Right ventricle myocardium inferior (tissue), 1 donor: ENCODE measurements at regions of chr14 and their contacts with region 1.

Region 1: GRCh38 chr14:33950320-33951182 is at the start of gene EGLN3:
- DNase-seq: peak; percentile 93
- ATAC-seq: peak; percentile 99
- total RNA-seq, gene EGLN3: 136 TPM

Region 2: DNA sequence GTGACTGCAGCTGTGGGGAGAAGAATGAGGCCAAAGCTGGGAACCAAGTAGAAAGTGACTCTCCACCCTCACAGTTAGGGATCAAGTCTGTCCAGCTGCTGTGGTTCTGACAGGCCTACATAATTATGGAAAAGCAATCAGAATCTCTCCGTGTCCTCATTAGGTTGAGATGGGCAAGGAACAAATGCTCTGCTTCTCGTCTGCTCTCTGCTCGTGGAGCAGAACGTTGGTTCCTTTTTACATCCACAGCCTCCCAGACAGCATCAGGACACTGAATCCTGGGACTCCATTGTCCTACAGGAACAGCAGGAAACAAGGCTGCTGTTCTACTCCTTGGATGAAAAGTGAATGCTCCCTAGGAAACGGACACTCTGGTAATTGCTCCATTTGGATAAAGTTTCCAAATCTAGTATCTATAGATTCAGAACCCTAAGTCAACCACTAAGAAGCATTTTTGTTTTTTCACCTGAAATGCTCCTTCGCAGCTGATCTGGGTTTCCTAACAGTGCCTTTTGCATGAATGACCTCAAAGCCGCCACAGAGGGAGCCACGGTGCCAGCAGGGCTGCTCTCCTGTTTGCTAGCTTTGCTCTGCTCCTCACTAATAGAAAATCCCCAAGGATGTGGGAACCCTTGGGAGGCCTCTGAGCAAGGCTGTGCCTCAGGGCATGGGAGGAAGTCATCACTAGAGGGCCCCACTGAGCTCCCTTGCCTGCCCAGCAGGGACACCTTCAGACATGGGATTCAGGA is 101.7 kb before region 1 on chr14:
- intact Hi-C with region 1: loop called (anchors 1 kb)
- DNase-seq: no peak
- ATAC-seq: peak; percentile 91

Region 3: GRCh38 chr14:33871394-33871793 is 79.2 kb before region 1 on chr14:
- intact Hi-C with region 1: no loop called
- DNase-seq: no peak
- ATAC-seq: no peak

Region 4: DNA sequence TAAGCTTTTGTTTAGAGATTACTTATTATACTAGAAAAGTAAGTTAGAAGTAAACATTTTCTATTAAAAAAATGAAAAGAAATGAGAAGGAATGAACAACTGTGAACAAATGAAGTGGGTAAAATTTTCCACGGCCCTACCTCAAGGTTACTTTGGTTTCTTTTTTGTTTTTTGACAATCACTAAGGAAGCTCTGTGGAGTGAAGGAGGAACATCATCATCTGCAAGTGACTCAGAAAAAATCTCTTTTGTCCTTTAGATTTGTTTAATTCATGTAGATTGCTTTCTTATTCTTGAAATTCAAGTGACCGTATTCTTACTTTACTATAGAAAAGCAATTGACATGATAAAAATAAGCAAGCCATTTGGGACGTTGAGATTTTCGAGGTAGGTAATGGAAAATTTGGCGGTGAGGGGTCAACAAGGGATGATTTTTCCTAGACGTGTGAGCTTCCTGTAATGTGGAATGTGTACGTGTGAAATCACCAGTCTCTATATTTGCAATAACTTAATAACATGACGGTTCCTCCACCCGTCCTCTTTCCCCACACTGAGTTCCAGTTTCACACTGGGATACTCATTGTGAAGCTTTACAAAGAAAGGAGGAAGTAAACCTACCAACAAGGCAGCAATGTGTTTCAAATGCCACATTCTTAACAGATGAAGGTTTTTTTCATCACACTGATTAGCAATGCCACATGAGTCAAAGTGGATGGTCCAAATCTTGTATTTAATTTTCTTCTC is 62.6 kb after region 1 on chr14:
- intact Hi-C with region 1: no loop called
- DNase-seq: no peak
- ATAC-seq: no peak

Region 5: DNA sequence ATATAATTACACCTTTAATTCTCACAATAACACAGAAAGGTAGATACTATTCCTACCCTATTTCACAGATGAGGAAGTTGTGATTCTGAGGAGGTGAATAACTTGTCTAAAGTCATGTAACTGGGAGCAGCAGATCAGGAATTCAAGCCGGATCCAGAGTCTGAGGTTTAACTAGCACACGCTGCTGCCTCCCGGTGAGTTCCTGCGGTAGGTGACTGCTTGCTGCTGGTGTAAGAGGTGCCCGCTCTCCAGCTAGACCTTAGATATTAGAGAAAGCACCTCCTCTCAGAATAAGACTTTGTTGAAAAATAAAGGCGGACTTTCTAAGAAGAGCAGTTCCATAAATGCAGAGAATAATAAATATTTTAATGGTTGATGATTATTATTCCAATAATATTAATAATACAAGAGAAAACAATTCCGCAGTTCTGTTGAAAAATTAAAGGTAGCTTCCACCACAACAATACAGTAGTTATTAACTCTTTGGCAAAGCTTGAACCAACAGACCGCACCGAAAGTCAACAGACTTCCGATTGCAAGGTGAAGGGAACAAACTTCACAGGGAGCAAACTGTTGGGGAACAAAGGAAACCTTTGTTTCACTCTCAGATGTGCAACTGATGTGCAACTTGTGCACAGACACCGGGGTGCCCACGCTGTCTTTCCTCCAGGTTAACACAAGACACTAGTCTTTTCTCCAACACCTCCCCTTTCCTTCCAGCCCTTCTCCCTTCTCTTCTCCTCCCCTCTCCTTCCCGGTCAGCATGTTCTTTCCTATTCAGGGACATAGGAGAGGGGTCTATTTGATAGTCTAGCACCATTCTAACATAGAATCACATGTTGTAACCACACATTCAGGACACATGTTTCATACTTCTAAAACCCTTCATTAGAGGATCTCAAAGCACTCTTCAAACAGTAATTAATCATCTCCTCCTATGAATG is 73.5 kb after region 1 on chr14:
- intact Hi-C with region 1: no loop called
- DNase-seq: no peak
- ATAC-seq: no peak

Region 6: GRCh38 chr14:34059855-34060638 is 109.5 kb after region 1 on chr14:
- intact Hi-C with region 1: loop called (anchors 2 kb)
- DNase-seq: peak; percentile 89
- ATAC-seq: peak; percentile 94

Region 7: DNA sequence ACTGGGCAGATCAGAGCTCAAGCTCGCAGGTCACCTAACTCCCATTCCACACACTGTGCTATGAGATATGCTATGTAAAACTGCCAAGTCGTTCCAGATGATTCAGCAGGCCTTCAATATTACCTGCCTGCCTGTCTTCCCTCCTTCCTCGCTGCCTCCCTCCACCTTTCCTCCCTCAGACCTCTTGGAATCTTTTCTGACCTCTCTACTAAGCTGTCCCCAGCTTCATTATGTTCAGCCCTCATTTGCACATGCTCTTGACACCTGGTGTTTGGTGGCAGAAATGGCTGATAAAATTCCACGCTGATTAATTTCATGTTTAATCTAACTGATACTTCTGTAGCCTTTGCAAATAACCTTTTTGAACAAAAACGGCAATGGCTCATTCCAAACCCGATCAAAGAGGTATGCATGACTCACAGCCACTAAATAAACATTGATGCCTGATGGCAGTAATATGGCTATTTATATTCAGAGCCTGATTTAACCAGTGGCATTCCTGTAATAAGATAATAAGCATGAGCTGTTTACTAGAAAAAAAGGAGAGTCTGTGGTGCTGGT is 131.1 kb after region 1 on chr14:
- intact Hi-C with region 1: loop called (anchors 5 kb)
- DNase-seq: no peak
- ATAC-seq: peak; percentile 66

Region 8: DNA sequence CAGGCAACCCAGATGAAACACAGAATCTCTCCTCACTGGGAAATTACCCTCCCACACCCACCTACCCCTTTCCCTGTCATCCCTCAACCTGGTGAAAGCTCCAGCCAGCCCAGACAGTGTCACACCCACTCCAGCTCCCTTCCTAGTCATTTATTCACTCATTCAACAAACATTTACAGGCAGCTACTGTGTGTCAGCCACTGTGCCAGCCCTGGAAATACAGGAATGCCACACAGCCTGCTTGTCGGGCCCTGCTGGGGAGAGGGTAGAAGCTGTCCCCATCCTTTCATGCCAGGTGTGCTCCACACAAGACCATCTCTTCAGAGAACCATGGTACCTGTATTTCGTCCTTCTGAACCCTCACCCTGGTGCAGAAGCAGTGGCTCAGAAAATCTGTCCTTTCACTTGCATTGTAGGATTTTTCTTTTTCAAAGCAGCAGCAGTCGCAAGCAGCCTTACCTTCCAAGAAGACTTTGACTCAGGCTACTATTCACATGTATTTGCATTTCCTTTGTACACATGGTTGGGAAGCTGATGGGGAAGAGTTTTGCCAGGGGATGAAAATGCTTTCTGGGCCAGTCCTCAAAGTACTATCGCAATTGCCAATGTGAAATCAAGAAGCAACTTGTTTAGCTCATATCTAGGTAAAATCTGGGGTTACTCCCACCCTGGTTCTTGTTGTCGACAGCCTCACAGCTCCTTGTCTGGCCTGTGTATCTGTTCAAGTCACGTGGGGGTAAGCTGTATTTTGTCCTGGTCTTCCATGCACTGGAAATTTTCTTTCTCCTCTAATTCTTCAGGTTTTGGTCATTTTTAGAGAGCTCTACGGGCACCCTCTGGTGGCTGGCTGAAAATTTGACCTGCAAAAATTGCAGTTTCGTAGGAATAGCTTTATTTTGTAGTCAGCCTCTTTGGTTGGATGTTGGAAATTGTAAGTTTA is 147.8 kb after region 1 on chr14:
- intact Hi-C with region 1: loop called (anchors 2 kb)
- DNase-seq: no peak
- ATAC-seq: peak; percentile 48

Region 9: GRCh38 chr14:34175574-34175973 is 225.0 kb after region 1 on chr14:
- intact Hi-C with region 1: no loop called
- DNase-seq: no peak
- ATAC-seq: no peak